Right ventricle myocardium superior (tissue), 1 donor: ENCODE measurements at regions of chr17 and their contacts with region 1.

Region 1: GRCh38 chr17:38485146-38485468 is 56.8 kb downstream of the ARHGAP23 start:
- DNase-seq: no peak
- ATAC-seq: no peak

Region 2: GRCh38 chr17:38421871-38422827 is 63.0 kb before region 1 on chr17:
- intact Hi-C with region 1: loop called (anchors 2 kb)
- DNase-seq: no peak
- ATAC-seq: no peak

Region 3: DNA sequence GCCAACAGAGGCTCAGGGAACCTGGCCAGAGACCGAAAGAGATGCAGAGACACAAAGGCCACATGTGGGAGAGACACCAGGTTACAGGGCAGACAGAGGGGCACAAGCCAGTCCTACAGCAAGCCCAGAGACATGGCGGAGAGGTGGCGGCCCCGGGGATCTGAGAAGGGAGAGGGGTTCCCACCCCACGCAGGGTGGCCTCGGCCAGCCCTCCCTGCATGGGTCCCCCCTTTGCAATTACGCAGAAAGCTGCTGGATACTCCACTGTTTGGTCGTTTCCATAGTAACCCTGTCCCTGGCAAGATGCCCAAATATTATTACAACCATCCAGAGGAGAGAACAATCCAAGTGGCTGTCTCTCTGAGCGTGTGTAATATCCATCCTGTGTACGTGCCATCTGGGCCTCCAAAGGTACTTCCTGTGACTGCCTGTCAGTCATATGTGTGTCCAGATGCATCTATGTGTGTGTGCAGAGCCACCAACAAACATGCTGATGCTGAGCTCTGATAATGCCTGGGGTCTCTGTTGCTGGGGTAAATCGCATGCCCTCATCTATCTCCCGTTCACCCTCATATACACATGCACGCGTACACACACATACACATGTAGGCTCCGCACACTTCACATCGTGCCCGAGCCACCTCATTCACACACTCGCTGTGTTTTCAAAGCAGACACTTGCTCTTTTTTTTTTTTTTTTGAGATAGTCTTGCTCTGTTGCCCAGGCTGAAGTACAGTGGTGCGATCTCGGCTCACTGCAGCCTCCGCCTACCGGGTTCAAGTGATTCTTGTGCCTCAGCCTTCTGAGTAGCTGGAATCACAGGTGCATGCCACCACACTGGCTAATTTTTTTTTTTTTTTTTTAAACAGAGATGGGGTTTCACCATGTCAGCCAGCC is 257.6 kb after region 1 on chr17:
- intact Hi-C with region 1: no loop called
- DNase-seq: peak; percentile 50
- ATAC-seq: peak; percentile 68